Dorsolateral prefrontal cortex (tissue), 120 donors: ENCODE measurements at regions of chr3 and their contacts with region 1.

Region 1: GRCh38 chr3:147807776-147808175 is 398.6 kb downstream of the ZIC1 start:
- DNase-seq: no peak
- H3K4me3 ChIP-seq: no peak overlapping the region
- H3K27ac ChIP-seq: no peak overlapping the region
- H3K27me3 ChIP-seq: peaks cover 0 to 3% (median 0%) of the 10 kb centered on the region in 45 donors
- CTCF ChIP-seq: no peak

Region 2: DNA sequence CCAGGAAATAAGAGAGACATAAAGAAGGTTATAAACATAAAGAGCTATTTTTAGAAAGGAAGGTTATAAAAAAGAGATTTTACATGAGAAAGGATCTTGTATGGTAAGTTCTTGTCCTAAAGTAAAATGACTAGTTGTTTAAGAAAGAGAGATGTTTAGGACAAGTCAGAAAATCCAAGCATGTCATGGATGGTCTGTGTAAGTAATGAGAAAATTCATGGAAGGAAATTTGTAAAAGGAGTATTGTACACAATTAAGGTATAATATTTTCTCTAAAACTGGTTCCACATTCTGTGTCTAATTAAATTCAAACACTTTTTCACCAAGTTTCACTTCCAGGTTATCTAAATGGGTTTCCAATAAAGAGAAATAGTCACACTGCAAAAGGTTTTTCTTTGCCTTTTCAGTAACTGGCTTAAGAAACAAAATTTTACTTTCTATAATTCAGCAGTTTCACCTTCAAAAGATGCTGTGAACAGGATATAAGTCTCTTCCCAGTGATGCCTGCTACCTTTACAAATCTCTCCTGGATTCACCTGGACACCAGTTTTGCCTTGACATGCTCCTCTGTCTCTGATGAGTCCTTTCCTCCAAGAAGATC is 57.1 kb after region 1 on chr3:
- intact Hi-C with region 1: no loop called
- DNase-seq: no peak
- H3K4me3 ChIP-seq: no peak overlapping the region
- H3K27ac ChIP-seq: no peak overlapping the region
- H3K27me3 ChIP-seq: no peaks in the 10 kb centered on the region
- CTCF ChIP-seq: no peak

Region 3: GRCh38 chr3:147930232-147930807 is 122.5 kb after region 1 on chr3:
- intact Hi-C with region 1: loop called in 1 of 2 experiments (anchors 10 kb)
- DNase-seq: no peak
- H3K4me3 ChIP-seq: peak overlapping the region in 8 of 59 donors; percentile 2 to 23 (median 10)
- H3K27ac ChIP-seq: peak overlapping the region in 1 of 59 donors; percentile 10
- H3K27me3 ChIP-seq: peaks cover 0 to 18% (median 0%) of the 10 kb centered on the region in 45 donors
- CTCF ChIP-seq: no peak